ENCODE measurements at regions of chr5 and their contacts with region 1.

Region 1: GRCh38 chr5:73591102-73591695 is 25.7 kb downstream of the UTP15 start:
- DNase-seq: peak; percentile 64 to 88
- ATAC-seq: peak; percentile 83 to 90
- H3K4me3 ChIP-seq: no peak overlapping the region
- H3K27ac ChIP-seq: peak overlapping the region; percentile 58 to 70
- H3K4me1 ChIP-seq: peaks cover 27% of the 10 kb centered on the region
- CTCF ChIP-seq: peak; percentile 97
- EP300 ChIP-seq: no peak
- POLR2A ChIP-seq: no peak
- RAD21 ChIP-seq: peak; percentile 97 to 98

Region 2: DNA sequence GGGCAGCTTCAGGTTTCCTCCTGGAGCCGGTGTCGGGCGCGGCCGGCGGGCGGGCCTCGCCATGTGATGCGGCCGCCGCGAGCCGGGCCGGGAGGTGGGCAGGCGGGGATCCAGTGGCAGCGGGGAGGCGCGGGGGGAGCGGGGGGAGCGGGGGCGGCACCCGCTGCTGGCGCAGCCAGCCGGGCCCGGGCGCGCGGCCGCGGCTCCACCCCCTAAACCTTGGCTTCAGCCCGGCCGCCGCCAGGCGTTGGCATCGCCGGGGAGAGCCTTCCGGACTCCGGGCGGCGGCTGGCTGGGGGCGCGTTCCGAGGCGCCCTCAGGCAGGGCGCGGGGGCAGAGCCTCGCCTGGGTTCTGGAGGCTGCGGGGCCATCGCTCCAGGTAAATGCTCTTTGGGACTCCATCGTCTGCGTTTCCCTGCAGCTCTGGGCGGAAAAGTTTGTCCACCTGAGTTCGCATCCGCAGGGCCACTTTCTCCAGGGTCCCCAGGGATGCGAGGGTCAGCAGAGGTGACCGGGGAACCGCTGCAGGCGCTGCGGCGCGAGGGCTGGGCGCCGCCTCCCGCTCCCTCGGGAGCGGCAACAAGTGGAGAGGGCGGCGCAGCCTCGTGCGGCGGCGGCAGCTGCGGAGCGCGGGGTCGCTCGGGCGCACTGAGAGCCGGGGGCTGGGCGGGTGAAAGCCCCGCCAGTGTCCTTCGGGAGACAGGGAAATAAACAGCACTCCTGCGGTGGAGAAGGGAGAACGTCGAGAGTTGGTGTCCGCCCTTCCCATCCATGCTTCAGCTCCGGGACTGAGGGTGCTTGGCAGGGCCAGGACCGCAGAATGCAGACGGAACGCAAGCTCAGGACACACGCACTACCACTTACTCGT is 35.0 kb after region 1 on chr5 and contains the start of gene ARHGEF28:
- CTCF ChIA-PET with region 1: interaction called, 26 read pairs
- POLR2A ChIA-PET with region 1: interaction called, 3 read pairs
- DNase-seq: peak; percentile 73 to 77
- ATAC-seq: peak; percentile 88 to 91
- H3K4me3 ChIP-seq: peak within 1 kb of the TSS; percentile 93
- H3K27ac ChIP-seq: peak within 1 kb of the TSS; percentile 98
- H3K4me1 ChIP-seq: peaks cover 59% of the 10 kb centered on the region
- CTCF ChIP-seq: no peak
- EP300 ChIP-seq: no peak; a peak in 1 of 5 replicates
- POLR2A ChIP-seq: peak; percentile 40
- RAD21 ChIP-seq: peak in 1 of 2 experiments; percentile 30; a peak in 1 of 5 replicates
- polyA plus RNA-seq, gene ARHGEF28: 22.3 and 28.9 TPM in 2 replicates

Region 3: GRCh38 chr5:73693481-73694061 is 102.4 kb after region 1 on chr5:
- CTCF ChIA-PET with region 1: interaction called, 113 read pairs
- POLR2A ChIA-PET with region 1: no interaction called
- DNase-seq: peak; percentile 40 to 50
- ATAC-seq: peak; percentile 54 to 75; a peak in 4 of 6 replicates
- H3K4me3 ChIP-seq: no peak overlapping the region
- H3K27ac ChIP-seq: peak overlapping the region; percentile 78 to 89
- H3K4me1 ChIP-seq: peaks cover 64% of the 10 kb centered on the region
- CTCF ChIP-seq: peak; percentile 73
- EP300 ChIP-seq: no peak
- POLR2A ChIP-seq: no peak
- RAD21 ChIP-seq: peak; percentile 58 to 72

Region 4: DNA sequence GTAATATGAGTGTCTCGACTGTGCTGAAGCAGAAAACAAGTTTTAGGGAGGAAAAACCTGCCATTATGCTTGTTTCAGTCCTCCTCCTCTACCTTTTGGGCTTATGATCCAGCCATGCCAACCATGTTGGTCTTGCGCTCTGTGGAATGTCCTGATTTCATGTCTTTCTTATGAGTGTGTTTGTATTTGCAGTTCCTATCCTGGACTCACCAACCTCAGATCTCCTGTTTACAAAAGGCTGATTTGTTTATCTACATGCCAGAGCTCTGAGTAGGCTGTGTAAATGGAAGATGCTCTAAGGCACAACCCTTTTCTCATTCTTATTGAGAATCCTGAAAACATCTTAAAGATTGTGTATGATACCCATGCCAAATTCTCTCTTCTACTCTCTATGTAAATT is 173.4 kb after region 1 on chr5:
- CTCF ChIA-PET with region 1: interaction called, 30 read pairs
- POLR2A ChIA-PET with region 1: no interaction called
- DNase-seq: peak; percentile 71 to 95
- ATAC-seq: peak; percentile 98 to 99
- H3K4me3 ChIP-seq: no peak overlapping the region
- H3K27ac ChIP-seq: peak overlapping the region; percentile 78 to 89
- H3K4me1 ChIP-seq: peaks cover 48% of the 10 kb centered on the region
- CTCF ChIP-seq: no peak
- EP300 ChIP-seq: peak; percentile 76 to 79; a peak in 2 of 5 replicates
- POLR2A ChIP-seq: no peak
- RAD21 ChIP-seq: peak; percentile 34 to 41; a peak in 3 of 5 replicates

Region 5: DNA sequence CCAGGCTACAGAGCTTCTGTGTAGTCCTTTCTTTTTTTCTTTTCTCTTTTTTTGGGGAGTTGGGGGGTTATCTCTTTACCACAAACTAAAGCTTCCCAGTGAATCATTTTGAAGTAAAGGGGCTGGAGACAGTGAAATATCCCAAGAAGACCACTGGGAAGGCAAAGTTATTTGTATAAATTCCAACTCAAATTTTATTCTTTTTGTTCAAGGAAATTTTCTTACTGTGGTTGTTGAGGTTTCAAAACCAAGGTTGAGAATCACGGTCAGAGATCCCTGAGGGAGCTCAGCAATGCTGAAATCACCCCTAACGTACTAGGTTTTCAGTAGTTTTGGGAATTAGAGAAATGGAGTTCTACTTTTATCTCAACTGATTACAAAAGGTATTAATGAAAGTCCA is 210.5 kb after region 1 on chr5:
- CTCF ChIA-PET with region 1: interaction called, 315 read pairs
- POLR2A ChIA-PET with region 1: interaction called, 5 read pairs
- DNase-seq: no peak
- ATAC-seq: no peak
- H3K4me3 ChIP-seq: no peak overlapping the region
- H3K27ac ChIP-seq: peak overlapping the region; percentile 59 to 77
- H3K4me1 ChIP-seq: peaks cover 35% of the 10 kb centered on the region
- CTCF ChIP-seq: no peak
- EP300 ChIP-seq: no peak
- POLR2A ChIP-seq: no peak
- RAD21 ChIP-seq: no peak

Region 6: GRCh38 chr5:73902327-73903051 is 311.3 kb after region 1 on chr5:
- CTCF ChIA-PET with region 1: interaction called, 16 read pairs
- POLR2A ChIA-PET with region 1: no interaction called
- DNase-seq: peak; percentile 41 to 68
- ATAC-seq: peak in 1 of 2 experiments; percentile 23; a peak in 1 of 6 replicates
- H3K4me3 ChIP-seq: no peak overlapping the region
- H3K27ac ChIP-seq: peak overlapping the region; percentile 50 to 81; a peak in 4 of 6 replicates
- H3K4me1 ChIP-seq: peaks cover 28% of the 10 kb centered on the region
- CTCF ChIP-seq: peak; percentile 90
- EP300 ChIP-seq: no peak
- POLR2A ChIP-seq: no peak
- RAD21 ChIP-seq: peak; percentile 83 to 90

Measured in A549 (cell line).